GM18951 (cell line): ENCODE measurements at regions of chr9 and their contacts with region 1.

Region 1: DNA sequence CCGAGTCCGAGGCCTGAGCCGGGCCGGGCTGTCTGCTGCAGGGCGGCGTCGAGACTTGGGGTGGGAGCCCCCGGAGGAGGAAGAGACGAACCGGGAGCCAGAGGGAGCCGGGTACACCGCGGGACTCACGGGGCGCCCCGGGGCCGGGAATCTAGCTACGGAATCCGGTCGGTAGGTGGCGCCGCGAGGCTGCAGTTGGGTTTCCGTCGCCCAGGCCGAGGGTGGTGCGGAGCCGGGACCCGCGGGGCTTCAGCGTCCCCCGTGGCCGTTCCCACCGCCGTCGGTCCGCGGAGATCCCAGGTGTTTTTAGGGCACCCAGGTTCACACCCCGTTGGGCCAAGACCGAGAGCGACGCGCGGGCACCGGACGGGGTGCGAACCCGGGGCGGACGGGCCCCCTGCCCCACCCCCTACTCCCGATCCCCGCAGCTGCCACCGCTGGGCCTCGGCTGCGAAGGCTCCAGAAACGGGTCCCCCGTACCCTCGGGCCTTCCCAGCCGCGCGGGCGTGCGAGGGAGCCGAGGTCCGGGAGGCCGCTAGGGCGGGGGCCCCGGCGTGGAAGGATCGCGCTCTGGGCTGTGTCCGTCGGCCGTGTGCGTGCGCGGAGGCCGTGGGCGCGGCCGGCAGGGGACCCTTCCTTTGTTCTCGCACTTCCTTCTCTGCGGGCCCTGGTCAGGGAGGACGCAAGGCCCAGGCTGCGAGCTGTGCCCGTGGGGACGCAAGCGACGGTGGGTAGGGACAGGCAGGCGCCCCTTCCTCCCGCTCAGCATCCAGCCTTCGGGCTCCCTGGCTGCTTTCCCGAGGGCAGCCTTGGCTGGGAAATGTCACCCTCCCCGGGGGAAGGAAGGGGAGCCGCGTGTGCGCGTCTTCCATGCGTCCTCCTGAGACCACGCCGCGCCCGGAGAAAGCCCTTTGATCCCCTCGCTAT is 146.6 kb downstream of the GAPVD1 start:
- POLR2A ChIP-seq: no peak

Region 2: DNA sequence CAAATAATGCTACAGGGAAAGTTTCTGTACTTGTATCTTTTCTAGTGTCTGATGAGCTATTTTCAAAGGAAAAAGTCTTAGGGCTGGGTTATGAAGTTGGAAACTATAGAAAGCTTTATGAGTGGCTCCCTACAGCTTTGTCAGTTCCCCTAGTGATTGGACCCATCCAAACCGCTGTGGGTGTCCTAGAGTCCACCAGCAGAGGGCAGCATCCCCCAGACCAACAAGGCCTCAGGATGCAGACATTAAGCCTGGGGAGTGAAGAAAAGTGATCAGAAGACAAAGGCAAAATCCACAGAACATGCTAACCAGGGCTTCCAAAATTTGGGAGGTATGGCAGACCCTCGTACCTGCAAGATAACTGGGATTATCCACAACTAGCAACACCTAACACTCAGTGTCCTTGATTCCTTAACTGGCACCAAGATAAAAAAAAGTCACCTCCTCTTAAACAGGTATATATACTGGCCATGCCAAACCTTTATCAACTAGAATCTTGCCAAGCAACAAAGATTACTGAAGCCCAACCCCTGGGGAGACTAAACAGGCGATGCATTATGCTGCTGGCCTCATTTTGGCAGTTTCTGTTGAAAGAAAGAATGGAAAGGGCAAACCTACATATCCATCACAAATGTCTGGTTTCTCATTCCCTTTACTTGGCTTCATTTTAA is 790.6 kb before region 1 on chr9:
- in situ Hi-C with region 1: no loop called
- POLR2A ChIP-seq: no peak

Region 3: GRCh38 chr9:126228781-126229444 is 820.7 kb after region 1 on chr9:
- in situ Hi-C with region 1: loop called (anchors 10 kb)
- POLR2A ChIP-seq: no peak